ENCODE measurements at regions of chr22 and their contacts with region 1.

Region 1: GRCh38 chr22:46013460-46014416 is 36.8 kb upstream of the WNT7B start:
- DNase-seq: peak; percentile 53 to 88 (median 66)
- ATAC-seq: peak; percentile 91
- H3K4me3 ChIP-seq: peak overlapping the region; percentile 78
- H3K4me3 Mint-ChIP-seq: peak overlapping the region; percentile 83 to 91 (median 89)
- H3K27ac ChIP-seq: peak overlapping the region; percentile 80
- H3K27ac Mint-ChIP-seq: peak overlapping the region; percentile 79 to 94 (median 87)
- H3K4me1 ChIP-seq: peaks cover 3 to 5% of the 10 kb centered on the region in 2 donors
- H3K4me1 Mint-ChIP-seq: peaks cover 0 to 13% (median 4%) of the 10 kb centered on the region in 7 donors
- H3K27me3 ChIP-seq: no peaks in the 10 kb centered on the region
- H3K27me3 Mint-ChIP-seq: peaks cover 0 to 5% (median 0%) of the 10 kb centered on the region in 5 donors

Region 2: DNA sequence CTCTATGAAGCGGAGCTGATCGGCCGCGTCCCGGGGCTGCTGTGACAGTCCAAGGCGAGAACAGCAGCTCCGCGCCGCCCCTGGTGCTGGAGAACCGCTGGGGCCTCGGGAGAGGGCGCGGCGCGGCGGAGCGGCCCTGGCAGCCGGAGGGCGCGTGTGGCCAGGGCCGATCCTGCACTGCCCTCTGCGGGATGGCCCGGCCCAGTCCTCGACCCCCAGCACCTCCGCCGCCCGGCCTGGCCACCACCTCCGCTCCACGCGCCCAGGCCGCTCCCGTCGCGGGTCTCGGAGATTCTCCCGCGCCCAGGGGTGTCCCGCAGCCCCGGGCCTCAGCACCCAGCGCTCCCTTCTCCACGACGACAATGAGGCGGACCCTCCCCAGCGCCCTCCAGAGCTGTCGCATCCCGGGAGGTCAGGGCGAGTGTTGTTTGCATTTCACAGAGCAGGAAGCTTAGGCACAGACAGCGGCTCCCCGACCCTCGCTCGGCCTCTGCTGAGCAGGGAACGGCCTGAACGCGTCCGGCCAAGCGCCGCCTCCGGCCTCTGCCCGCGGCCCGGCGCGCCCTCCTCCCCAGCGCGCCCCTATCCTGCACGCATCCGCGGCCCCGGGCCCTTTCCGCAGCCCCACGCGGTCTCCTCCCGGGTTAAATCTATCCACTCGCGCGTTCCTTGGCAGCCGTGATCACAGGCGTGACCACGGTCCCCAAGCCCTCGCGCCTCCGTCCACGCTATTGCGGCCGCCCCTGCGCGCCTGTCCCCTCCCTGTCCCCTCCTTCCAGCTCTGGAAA is 146.4 kb before region 1 on chr22:
- CTCF ChIA-PET with region 1: no interaction called
- POLR2A ChIA-PET with region 1: no interaction called
- intact Hi-C with region 1: no loop called
- DNase-seq: peak in 1 of 9 donors; percentile 18
- ATAC-seq: no peak
- H3K4me3 ChIP-seq: no peak overlapping the region
- H3K4me3 Mint-ChIP-seq: no peak overlapping the region
- H3K27ac ChIP-seq: no peak overlapping the region
- H3K27ac Mint-ChIP-seq: no peak overlapping the region
- H3K4me1 ChIP-seq: no peaks in the 10 kb centered on the region
- H3K4me1 Mint-ChIP-seq: peaks cover 5 to 17% (median 8%) of the 10 kb centered on the region in 7 donors
- H3K27me3 ChIP-seq: no peaks in the 10 kb centered on the region
- H3K27me3 Mint-ChIP-seq: peaks cover 37 to 61% (median 43%) of the 10 kb centered on the region in 5 donors

Region 3: DNA sequence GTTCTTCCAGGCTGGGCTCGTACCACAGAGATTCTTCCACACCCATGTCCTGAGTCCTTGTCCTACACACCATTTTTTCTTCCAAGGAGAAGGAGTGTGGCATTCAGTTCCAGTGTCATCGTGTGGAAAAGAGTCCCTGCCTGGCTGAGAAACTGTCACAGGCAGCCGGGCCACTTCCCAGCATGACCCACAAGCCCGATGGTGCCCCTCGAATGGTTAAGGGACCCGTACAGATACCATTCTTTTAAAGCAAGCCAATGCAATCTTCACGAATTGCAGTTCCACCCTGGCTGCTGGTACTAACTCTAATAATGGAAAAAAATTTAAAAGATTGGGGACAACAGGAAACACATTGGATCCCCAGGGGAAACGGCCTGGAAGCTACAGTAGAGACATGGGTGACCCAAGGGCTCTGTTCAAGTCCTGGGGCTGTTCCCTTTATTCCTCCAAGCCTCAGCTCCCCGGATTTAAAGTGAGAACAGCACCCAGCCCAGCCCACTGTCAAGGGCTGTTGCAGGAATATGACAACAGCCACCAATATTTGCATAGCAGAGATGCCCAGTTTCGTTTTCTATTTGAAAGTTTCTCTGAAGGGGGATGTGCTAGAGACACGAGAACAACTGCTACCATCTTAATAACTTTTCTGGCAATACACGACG is 44.2 kb after region 1 on chr22:
- CTCF ChIA-PET with region 1: no interaction called
- POLR2A ChIA-PET with region 1: interaction called, 13 read pairs
- intact Hi-C with region 1: loop called in 1 of 2 experiments (anchors 5 kb)
- DNase-seq: peak in 5 of 9 donors; percentile 39 to 55 (median 53)
- ATAC-seq: peak; percentile 74
- H3K4me3 ChIP-seq: no peak overlapping the region
- H3K4me3 Mint-ChIP-seq: peak overlapping the region; percentile 17 to 71 (median 66)
- H3K27ac ChIP-seq: peak overlapping the region; percentile 72
- H3K27ac Mint-ChIP-seq: peak overlapping the region; percentile 84 to 95 (median 87)
- H3K4me1 ChIP-seq: peaks cover 19 to 35% of the 10 kb centered on the region in 2 donors
- H3K4me1 Mint-ChIP-seq: peaks cover 29 to 64% (median 58%) of the 10 kb centered on the region in 7 donors
- H3K27me3 ChIP-seq: no peaks in the 10 kb centered on the region
- H3K27me3 Mint-ChIP-seq: peaks cover 0 to 5% (median 0%) of the 10 kb centered on the region in 5 donors

Region 4: GRCh38 chr22:46071451-46072109 is 57.8 kb after region 1 on chr22:
- CTCF ChIA-PET with region 1: no interaction called
- POLR2A ChIA-PET with region 1: interaction called, 7 read pairs
- intact Hi-C with region 1: loop called (anchors 2 kb)
- DNase-seq: peak in 8 of 9 donors; percentile 45 to 77 (median 66)
- ATAC-seq: peak; percentile 44
- H3K4me3 ChIP-seq: peak overlapping the region; percentile 66
- H3K4me3 Mint-ChIP-seq: peak overlapping the region; percentile 82 to 90 (median 86)
- H3K27ac ChIP-seq: peak overlapping the region; percentile 69
- H3K27ac Mint-ChIP-seq: peak overlapping the region in 7 of 9 donors; percentile 57 to 90 (median 74)
- H3K4me1 ChIP-seq: peaks cover 0 to 37% of the 10 kb centered on the region in 2 donors
- H3K4me1 Mint-ChIP-seq: peaks cover 42 to 73% (median 66%) of the 10 kb centered on the region in 7 donors
- H3K27me3 ChIP-seq: no peaks in the 10 kb centered on the region
- H3K27me3 Mint-ChIP-seq: peaks cover 0 to 10% (median 0%) of the 10 kb centered on the region in 5 donors

Region 5: DNA sequence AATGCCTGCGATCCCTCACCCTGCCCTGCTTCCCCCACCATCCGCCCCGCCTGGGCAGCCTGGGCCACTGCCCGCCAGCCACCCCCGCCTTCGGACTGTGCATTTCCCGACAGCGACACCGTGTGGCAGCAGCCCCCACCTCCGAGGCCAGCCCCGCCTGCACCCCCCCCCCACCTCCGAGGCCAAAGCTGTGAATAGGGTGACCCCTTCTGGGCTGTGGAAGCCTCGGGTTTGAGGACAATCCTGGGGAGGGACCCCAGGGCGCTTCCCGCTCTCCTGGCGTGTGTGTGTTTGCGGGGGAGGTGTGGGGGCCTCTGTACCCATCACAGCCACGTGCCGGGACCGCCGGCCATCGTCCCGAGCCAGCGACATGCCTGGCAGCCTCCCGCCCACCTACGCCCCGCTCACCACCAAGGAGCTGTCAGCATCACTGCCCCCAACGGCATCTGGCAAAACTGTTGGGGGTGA is 102.8 kb after region 1 on chr22:
- CTCF ChIA-PET with region 1: interaction called, 112 read pairs
- POLR2A ChIA-PET with region 1: interaction called, 5 read pairs
- intact Hi-C with region 1: loop called in 1 of 2 experiments (anchors 1 kb)
- DNase-seq: peak; percentile 58 to 87 (median 80)
- ATAC-seq: peak; percentile 98
- H3K4me3 ChIP-seq: no peak overlapping the region
- H3K4me3 Mint-ChIP-seq: no peak overlapping the region
- H3K27ac ChIP-seq: no peak overlapping the region
- H3K27ac Mint-ChIP-seq: no peak overlapping the region
- H3K4me1 ChIP-seq: peaks cover 0 to 4% of the 10 kb centered on the region in 2 donors
- H3K4me1 Mint-ChIP-seq: peaks cover 0 to 6% (median 0%) of the 10 kb centered on the region in 7 donors
- H3K27me3 ChIP-seq: no peaks in the 10 kb centered on the region
- H3K27me3 Mint-ChIP-seq: no peaks in the 10 kb centered on the region

Region 6: DNA sequence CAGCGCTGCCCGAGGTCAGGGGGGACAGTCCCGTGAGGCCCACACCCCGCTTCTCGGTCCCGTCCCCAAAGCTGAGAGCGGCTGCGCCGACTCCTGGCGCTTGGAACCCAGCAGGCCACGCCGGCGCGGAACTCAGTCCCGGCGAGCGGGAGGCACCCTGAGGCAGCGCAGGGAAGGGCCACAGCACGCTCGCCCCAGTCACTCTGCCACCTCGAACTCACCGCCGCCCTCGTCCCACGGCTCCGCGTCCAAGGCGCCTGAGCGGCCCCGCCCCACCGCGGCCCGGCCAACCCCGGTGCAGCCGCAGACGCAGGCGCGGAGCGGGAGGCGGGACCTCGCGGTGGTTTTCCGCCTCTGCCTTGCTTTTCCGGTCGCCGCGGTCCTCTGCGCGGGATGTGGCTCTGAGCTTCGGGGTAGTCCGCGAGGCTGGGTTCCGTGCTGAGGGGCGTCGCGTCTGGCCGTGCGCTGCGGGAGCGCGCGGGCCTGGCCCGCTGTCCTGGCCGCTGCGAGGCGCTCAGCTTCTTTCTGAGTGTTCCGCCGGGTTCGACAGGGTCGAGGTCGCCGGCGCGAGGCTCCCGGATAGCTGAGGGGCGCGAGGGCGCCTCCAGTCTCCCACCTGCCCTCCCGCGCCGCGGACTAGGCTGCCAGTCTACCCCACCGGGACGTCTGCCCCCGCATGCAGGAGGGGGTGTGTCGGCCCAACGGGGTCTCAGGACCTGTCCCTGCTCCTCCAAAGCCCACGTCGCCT is 236.5 kb after region 1 on chr22 and contains the start of gene CDPF1:
- CTCF ChIA-PET with region 1: no interaction called
- POLR2A ChIA-PET with region 1: no interaction called
- intact Hi-C with region 1: loop called in 1 of 2 experiments (anchors 5 kb)
- DNase-seq: peak; percentile 82 to 96 (median 86)
- ATAC-seq: peak; percentile 97
- H3K4me3 ChIP-seq: peak within 1 kb of the TSS; percentile 71
- H3K4me3 Mint-ChIP-seq: peak within 1 kb of the TSS; percentile 74 to 93 (median 83)
- H3K27ac ChIP-seq: peak within 1 kb of the TSS; percentile 77
- H3K27ac Mint-ChIP-seq: peak within 1 kb of the TSS; percentile 51 to 92 (median 77)
- H3K4me1 ChIP-seq: peaks cover 5 to 7% of the 10 kb centered on the region in 2 donors
- H3K4me1 Mint-ChIP-seq: peaks cover 17 to 32% (median 29%) of the 10 kb centered on the region in 7 donors
- H3K27me3 ChIP-seq: no peaks in the 10 kb centered on the region
- H3K27me3 Mint-ChIP-seq: no peaks in the 10 kb centered on the region
- total RNA-seq, gene CDPF1: 4.2 to 13.8 (median 11.7) TPM

Region 7: GRCh38 chr22:46309526-46310085 is 295.9 kb after region 1 on chr22:
- CTCF ChIA-PET with region 1: no interaction called
- POLR2A ChIA-PET with region 1: no interaction called
- intact Hi-C with region 1: loop called (anchors 5 kb)
- DNase-seq: no peak
- ATAC-seq: no peak
- H3K4me3 ChIP-seq: no peak overlapping the region
- H3K4me3 Mint-ChIP-seq: no peak overlapping the region
- H3K27ac ChIP-seq: no peak overlapping the region
- H3K27ac Mint-ChIP-seq: peak overlapping the region in 1 of 9 donors; percentile 86
- H3K4me1 ChIP-seq: no peaks in the 10 kb centered on the region
- H3K4me1 Mint-ChIP-seq: peaks cover 0 to 13% (median 0%) of the 10 kb centered on the region in 7 donors
- H3K27me3 ChIP-seq: no peaks in the 10 kb centered on the region
- H3K27me3 Mint-ChIP-seq: no peaks in the 10 kb centered on the region